Right cardiac atrium (tissue), 5 donors: ENCODE measurements at regions of chr19 and their contacts with region 1.

Region 1: DNA sequence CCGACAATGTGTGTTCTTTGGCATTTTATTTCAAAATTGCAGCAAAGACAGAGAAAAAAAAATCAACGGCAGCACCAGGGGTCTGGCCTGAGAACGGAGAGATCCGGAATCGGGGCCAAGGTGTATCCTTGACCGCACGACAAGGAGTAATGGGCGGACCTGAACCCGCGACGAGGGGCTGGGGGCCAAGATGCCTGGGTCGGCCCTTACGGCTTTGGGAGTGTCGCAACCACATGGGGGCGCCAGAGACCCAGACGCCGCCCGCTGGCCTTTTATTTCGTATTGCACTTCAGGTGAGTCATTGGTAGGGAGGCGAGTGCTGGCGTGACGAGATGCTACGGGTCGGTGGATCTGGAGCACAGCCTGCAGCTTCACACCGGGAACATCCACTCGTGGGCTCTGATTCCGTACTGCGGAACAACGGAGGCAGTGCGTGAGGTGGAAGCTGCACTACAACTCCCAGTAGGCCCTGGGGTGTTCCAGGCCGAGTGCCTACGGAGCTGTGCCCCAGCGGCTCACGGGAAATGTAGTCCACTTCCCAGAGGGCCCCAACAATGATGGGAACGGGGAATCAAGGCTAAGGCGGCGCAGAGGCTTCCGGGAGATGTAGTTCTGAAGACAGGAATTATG is 15.7 kb downstream of the BCAT2 start:
- DNase-seq: peak; percentile 94 to 97 (median 96)
- ATAC-seq: peak; percentile 98
- H3K4me3 ChIP-seq: peak overlapping the region; percentile 61
- H3K27ac ChIP-seq: peak overlapping the region; percentile 89
- H3K4me1 ChIP-seq: no peaks in the 10 kb centered on the region
- H3K27me3 ChIP-seq: no peaks in the 10 kb centered on the region

Region 2: DNA sequence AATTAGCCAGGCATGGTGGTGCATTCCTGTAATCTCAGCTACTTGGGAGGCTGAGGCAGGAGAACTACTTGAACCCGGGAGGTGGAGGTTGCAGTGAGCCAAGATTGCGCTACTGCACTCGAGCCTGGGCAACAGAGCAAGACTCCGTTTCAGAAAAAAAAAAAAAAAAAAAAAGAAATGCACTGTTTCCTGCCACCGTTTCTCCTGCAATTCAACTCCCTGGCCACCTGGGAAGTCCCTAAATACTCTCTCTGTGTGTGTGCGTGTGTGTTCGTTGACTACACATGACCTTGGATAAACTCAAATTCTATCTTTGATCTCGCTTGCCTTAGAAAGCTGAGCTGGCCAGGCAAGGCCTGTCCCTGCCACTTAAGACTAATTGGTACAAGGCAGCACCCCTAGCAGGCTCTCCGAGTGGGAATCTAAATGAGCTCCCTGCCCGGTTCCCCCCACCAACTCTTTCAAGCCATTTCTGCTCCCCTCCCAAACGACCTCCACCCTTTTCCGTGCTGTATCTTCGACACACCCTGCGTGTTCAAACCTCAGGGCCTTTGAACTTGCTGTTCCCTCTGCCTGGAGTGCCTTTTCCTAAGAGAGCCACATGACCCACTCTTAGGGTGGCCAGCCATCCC is 20.8 kb after region 1 on chr19:
- intact Hi-C with region 1: loop called in 1 of 4 experiments (anchors 2 kb)
- DNase-seq: no peak
- ATAC-seq: no peak
- H3K4me3 ChIP-seq: no peak overlapping the region
- H3K27ac ChIP-seq: peak overlapping the region; percentile 11
- H3K4me1 ChIP-seq: peaks cover 2% of the 10 kb centered on the region
- H3K27me3 ChIP-seq: no peaks in the 10 kb centered on the region

Region 3: GRCh38 chr19:48835734-48836088 is 40.5 kb after region 1 on chr19:
- intact Hi-C with region 1: loop called (anchors 2 to 5 kb)
- DNase-seq: peak; percentile 91 to 98 (median 96)
- ATAC-seq: peak; percentile 90 to 91
- H3K4me3 ChIP-seq: peak overlapping the region; percentile 37
- H3K27ac ChIP-seq: no peak overlapping the region
- H3K4me1 ChIP-seq: no peaks in the 10 kb centered on the region
- H3K27me3 ChIP-seq: no peaks in the 10 kb centered on the region

Region 4: DNA sequence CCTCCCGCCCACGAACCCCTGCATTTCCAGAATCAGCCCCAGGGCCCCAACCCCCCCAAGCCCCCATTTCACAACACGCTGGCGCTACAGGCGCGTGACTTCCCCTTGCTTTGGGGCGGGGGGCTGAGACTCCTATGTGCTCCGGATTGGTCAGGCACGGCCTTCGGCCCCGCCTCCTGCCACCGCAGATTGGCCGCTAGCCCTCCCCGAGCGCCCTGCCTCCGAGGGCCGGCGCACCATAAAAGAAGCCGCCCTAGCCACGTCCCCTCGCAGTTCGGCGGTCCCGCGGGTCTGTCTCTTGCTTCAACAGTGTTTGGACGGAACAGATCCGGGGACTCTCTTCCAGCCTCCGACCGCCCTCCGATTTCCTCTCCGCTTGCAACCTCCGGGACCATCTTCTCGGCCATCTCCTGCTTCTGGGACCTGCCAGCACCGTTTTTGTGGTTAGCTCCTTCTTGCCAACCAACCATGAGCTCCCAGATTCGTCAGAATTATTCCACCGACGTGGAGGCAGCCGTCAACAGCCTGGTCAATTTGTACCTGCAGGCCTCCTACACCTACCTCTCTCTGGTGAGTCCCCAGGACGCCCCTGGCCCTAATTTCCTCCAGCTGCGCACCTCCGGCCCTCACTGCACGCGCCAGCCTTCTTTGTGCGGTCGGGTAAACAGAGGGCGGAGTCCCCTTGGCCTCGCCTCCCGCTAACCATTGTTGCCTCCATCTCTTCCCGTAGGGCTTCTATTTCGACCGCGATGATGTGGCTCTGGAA is 170.1 kb after region 1 on chr19 and contains the start of gene FTL:
- intact Hi-C with region 1: loop called in 3 of 4 experiments (anchors 5 to 10 kb)
- DNase-seq: peak; percentile 98 to 99 (median 99)
- ATAC-seq: peak; percentile 87 to 90
- H3K4me3 ChIP-seq: peak within 1 kb of the TSS; percentile 69
- H3K27ac ChIP-seq: peak within 1 kb of the TSS; percentile 86
- H3K4me1 ChIP-seq: peaks cover 11% of the 10 kb centered on the region
- H3K27me3 ChIP-seq: no peaks in the 10 kb centered on the region
- total RNA-seq, gene FTL: 1,459 to 1,840 (median 1,541) TPM

Region 5: GRCh38 chr19:48970923-48971395 is 175.8 kb after region 1 on chr19:
- intact Hi-C with region 1: loop called in 3 of 4 experiments (anchors 5 to 10 kb)
- DNase-seq: peak; percentile 85 to 95 (median 93)
- ATAC-seq: peak; percentile 49 to 63
- H3K4me3 ChIP-seq: no peak overlapping the region
- H3K27ac ChIP-seq: no peak overlapping the region
- H3K4me1 ChIP-seq: peaks cover 3% of the 10 kb centered on the region
- H3K27me3 ChIP-seq: no peaks in the 10 kb centered on the region